Transverse colon (tissue), 4 donors: ENCODE measurements at regions of chr5 and their contacts with region 1.

Region 1: GRCh38 chr5:55601204-55601618 is 66.4 kb upstream of the PLPP1 start:
- DNase-seq: peak; percentile 85
- H3K4me3 ChIP-seq: no peak overlapping the region
- H3K27ac ChIP-seq: peak overlapping the region; percentile 92 to 94 (median 93)
- H3K4me1 ChIP-seq: peaks cover 39 to 64% (median 53%) of the 10 kb centered on the region in 4 donors
- H3K27me3 ChIP-seq: no peaks in the 10 kb centered on the region
- CTCF ChIP-seq: no peak
- EP300 ChIP-seq: no peak
- POLR2A ChIP-seq: peak; percentile 12

Region 2: GRCh38 chr5:55564721-55565120 is 36.5 kb before region 1 on chr5:
- in situ Hi-C with region 1: no loop called
- intact Hi-C with region 1: loop called (anchors 5 kb)
- DNase-seq: no peak
- H3K4me3 ChIP-seq: no peak overlapping the region
- H3K27ac ChIP-seq: no peak overlapping the region
- H3K4me1 ChIP-seq: peaks cover 0 to 6% (median 1%) of the 10 kb centered on the region in 4 donors
- H3K27me3 ChIP-seq: no peaks in the 10 kb centered on the region
- CTCF ChIP-seq: no peak
- EP300 ChIP-seq: no peak
- POLR2A ChIP-seq: no peak

Region 3: DNA sequence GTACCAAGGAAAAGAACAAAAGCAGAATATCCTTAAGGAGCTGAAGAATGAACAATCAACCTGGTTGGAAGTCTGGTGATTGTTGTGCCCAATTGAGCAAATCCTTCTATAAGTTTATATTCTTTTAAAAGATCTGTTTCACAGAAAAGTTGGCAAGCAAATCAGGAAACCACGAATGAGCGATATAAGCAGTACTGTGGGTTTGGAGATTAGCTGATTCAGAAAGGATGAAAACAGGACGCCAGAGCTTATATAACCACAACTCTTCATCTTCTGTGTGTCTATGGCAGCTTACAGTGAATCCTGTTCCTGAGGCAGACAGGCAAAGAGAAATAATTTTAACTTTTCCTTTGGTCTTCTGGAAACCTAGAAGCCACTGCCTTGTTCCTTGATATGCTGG is 49.2 kb after region 1 on chr5:
- in situ Hi-C with region 1: no loop called
- intact Hi-C with region 1: no loop called
- DNase-seq: no peak
- H3K4me3 ChIP-seq: no peak overlapping the region
- H3K27ac ChIP-seq: peak overlapping the region in 1 of 4 donors; percentile 6
- H3K4me1 ChIP-seq: peaks cover 0 to 7% (median 0%) of the 10 kb centered on the region in 4 donors
- H3K27me3 ChIP-seq: no peaks in the 10 kb centered on the region
- CTCF ChIP-seq: no peak
- EP300 ChIP-seq: no peak
- POLR2A ChIP-seq: no peak